ENCODE measurements at regions of chr14 and their contacts with region 1.

Region 1: DNA sequence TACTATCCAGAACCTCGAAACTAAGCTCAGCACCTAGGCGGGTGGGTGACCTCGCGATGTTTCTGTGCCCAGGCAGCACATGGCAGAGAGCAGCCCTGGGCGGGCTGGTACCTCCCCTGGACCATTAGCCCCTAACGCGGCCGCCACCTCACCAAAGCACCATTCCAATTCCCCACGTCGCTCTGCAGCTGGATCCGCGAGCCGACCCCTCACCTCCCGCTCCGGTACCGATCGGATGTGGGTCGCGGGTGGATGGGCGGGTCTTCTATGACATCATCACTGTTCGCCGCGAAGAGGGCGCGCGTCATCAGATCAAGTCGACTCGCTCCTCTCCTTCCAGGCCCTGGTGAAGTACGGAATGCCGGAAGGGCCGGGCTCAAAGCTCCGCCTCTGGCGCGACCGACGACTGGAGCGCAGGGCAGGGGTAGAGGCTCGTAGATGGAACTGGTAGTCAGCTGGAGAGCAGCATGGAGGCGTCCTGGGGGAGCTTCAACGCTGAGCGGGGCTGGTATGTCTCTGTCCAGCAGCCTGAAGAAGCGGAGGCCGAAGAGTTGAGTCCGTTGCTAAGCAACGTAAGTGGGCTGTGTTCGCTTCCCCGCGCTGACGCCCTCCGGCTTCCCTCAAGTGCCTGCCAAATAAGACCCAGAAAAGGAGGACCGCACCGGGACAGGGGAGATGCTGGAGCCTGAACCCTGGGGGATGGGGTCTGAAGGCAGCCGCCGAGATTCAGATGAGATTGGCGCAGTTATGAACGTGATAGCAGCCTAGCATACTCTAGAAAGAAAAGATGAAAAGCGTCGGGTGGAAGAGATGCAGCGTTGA is at the starts of genes SLC38A6 and TRMT5:
- DNase-seq: peak; percentile 95
- H3K4me3 ChIP-seq: peak within 1 kb of the TSS; percentile 65 to 97 (median 90)
- H3K27ac ChIP-seq: peak within 1 kb of the TSS; percentile 99
- H3K4me1 ChIP-seq: peaks cover 28% of the 10 kb centered on the region
- H3K27me3 ChIP-seq: no peaks in the 10 kb centered on the region
- CTCF ChIP-seq: no peak
- total RNA-seq, gene SLC38A6: 15.2 to 46.5 TPM
- total RNA-seq, gene TRMT5: 15.3 to 18.6 TPM

Region 2: GRCh38 chr14:60648934-60649874 is 331.8 kb before region 1 on chr14 and contains the start of gene SIX1:
- CTCF ChIA-PET with region 1: no interaction called
- dilution Hi-C with region 1: loop called (anchors 25 kb)
- in situ Hi-C with region 1: no loop called
- intact Hi-C with region 1: no loop called
- DNase-seq: peak; percentile 90
- H3K4me3 ChIP-seq: peak within 1 kb of the TSS; percentile 30 to 60 (median 50)
- H3K27ac ChIP-seq: no peak within 1 kb of the TSS
- H3K4me1 ChIP-seq: peaks cover 40% of the 10 kb centered on the region
- H3K27me3 ChIP-seq: peaks cover 30% of the 10 kb centered on the region
- CTCF ChIP-seq: no peak
- total RNA-seq, gene SIX1: 0.17 to 2.1 TPM

Region 3: DNA sequence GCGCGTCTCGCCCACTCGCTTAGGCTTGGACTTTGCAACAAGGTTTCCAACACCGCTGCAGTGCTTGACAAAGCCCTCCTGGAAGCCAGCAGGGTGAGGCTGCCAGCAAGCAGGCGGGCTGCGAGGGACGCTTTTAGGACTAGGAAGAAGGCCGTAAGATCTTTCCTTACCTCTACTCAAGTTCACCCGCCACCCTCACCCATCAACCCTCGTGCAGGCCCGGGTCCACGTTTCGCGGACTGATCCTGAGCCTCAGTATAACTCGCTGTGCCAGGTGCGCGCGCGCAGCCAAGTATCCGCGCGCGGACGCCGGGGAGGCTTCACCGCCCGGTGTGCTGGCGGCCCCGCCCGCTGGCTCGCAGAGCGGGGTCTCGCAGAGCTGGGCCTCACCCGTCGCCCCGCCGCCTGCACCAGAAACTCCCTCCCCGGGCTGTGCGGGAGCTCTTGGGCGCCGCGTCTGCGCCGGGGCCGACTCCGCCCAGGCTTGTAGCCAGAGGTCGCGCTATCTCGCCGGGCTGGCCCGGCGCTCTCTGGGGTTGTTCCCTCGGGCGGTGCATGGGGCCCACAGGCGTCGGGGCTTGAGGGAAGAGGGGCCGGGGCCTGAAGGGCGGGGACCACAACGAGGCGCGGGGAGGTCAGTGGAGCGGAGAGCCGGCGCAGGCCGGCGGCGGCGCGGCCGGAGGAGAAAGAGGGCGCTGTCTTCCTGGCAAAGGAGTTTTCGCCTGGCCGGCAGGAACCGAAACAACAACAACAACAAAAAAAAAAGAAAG is 324.2 kb before region 1 on chr14:
- CTCF ChIA-PET with region 1: no interaction called
- dilution Hi-C with region 1: no loop called
- in situ Hi-C with region 1: no loop called
- intact Hi-C with region 1: loop called (anchors 2 kb)
- DNase-seq: peak; percentile 68
- H3K4me3 ChIP-seq: peak overlapping the region; percentile 57 to 76 (median 72)
- H3K27ac ChIP-seq: no peak overlapping the region
- H3K4me1 ChIP-seq: peaks cover 20% of the 10 kb centered on the region
- H3K27me3 ChIP-seq: peaks cover 18% of the 10 kb centered on the region
- CTCF ChIP-seq: peak in 1 of 2 donors; percentile 58

Region 4: GRCh38 chr14:60878536-60878935 is 102.5 kb before region 1 on chr14:
- CTCF ChIA-PET with region 1: no interaction called
- dilution Hi-C with region 1: no loop called
- in situ Hi-C with region 1: no loop called
- intact Hi-C with region 1: no loop called
- DNase-seq: peak; percentile 9
- H3K4me3 ChIP-seq: no peak overlapping the region
- H3K27ac ChIP-seq: no peak overlapping the region
- H3K4me1 ChIP-seq: peaks cover 10% of the 10 kb centered on the region
- H3K27me3 ChIP-seq: no peaks in the 10 kb centered on the region
- CTCF ChIP-seq: no peak

Region 5: DNA sequence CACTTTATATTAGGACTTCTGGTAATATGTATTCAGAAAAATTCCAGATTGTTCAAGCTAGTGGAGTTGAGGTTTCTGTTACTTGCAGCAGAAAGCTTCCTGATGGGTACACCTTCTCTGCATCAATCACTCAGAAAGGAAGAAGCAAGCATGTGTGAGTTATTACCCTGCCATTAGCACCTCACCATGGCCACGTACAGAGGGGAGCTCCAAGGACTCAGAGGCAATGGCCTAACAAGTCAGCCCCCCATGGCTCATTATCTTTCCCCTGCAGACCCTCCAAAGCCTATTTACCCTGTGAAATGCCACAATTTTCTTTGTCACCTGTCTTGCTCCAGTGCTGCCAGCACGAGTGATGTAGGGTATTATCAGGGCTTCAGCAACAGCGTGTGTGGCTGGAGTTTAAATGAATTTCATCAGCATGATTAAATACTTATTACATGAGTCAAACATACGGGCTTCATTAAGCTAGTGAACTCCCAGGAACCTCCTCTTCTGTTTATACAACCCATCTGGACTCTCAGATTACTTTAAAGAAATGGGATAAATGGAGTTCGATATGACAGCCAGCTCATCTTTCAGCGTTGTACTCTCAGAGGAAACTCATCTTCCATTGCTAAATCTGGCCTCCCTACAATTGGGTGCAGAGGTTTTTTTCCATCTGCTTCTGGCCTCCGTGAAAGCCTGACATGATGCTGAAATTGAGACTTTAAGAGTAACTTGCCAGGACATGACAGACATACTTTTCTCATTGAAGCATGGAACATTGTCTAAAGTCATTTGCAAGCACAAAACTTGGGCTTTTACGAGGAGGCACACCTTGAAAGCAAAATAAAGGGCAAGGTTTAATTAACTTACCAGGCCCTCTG is 164.2 kb after region 1 on chr14:
- CTCF ChIA-PET with region 1: no interaction called
- dilution Hi-C with region 1: no loop called
- in situ Hi-C with region 1: no loop called
- intact Hi-C with region 1: no loop called
- DNase-seq: peak; percentile 82
- H3K4me3 ChIP-seq: no peak overlapping the region
- H3K27ac ChIP-seq: peak overlapping the region; percentile 82
- H3K4me1 ChIP-seq: peaks cover 51% of the 10 kb centered on the region
- H3K27me3 ChIP-seq: no peaks in the 10 kb centered on the region
- CTCF ChIP-seq: no peak

Region 6: DNA sequence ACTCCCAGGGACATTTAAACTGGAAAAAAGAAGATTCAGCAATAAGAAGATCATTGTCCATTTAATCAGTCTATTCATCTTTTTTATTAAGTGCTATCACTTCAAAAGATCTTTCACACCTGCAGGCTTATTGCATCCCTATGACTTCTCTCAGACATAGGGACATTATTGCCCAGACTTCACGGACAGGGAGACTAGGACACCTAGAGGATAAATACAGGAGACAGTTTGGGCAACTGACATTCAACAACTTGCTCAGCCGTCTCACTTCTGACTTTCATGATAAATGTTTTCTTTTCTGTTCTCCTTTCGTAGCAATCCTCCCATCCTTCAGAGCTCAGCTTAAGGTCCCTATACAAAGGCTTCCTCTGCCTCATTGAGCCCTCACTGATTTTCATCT is 215.8 kb after region 1 on chr14:
- CTCF ChIA-PET with region 1: no interaction called
- dilution Hi-C with region 1: no loop called
- in situ Hi-C with region 1: no loop called
- intact Hi-C with region 1: loop called (anchors 2 kb)
- DNase-seq: peak; percentile 25
- H3K4me3 ChIP-seq: no peak overlapping the region
- H3K27ac ChIP-seq: no peak overlapping the region
- H3K4me1 ChIP-seq: no peaks in the 10 kb centered on the region
- H3K27me3 ChIP-seq: no peaks in the 10 kb centered on the region
- CTCF ChIP-seq: peak; percentile 49 to 67

Measured in mammary epithelial cell (primary cell).